ENCODE measurements at regions of chr6 and their contacts with region 1.

Region 1: DNA sequence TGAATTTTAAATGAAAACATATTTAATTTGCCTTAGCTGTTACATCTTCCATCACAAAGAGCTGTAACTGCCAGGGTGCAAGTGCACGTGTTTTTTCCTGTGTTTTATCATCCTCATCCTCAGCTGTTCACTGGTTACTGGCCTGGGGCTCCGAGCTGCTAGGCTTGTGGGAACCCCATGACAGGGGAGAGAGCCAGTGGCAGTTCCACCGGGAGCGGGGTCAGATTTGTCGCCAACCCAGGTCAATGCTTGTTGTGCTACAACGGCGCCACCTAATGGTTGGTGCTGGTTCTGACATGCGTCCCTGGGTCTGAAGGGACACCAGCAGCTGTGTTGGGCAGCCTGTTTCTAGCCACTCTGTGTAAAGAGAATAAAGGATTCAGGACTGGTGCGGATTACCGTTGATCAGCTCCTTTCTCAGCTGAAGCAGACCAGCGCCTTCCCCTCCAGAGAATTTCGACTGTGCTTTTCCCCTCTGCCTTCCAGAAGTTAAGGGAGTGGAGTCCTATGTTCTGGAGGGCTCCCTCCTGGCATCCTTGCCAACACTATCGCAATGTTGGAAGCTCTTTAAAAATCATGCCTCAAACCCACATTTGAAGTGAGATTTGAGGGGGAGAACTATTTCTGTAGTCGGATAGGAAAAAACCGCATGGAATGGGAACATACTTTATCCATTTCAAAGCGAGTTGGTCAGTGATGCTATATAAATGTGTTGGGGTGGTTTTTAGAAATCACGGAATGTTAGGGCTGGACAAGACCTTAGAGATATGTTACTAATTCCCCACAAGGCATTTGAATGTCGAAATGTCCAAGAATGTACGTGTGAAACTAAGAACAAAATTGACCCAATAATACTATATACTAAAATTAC is 32.1 kb downstream of the SUMO4 start:
- DNase-seq: peak; percentile 95
- ATAC-seq: peak; percentile 98
- H3K4me3 Mint-ChIP-seq: peak overlapping the region; percentile 28
- H3K27ac Mint-ChIP-seq: peak overlapping the region; percentile 76
- H3K4me1 Mint-ChIP-seq: peaks cover 14% of the 10 kb centered on the region
- H3K27me3 Mint-ChIP-seq: no peaks in the 10 kb centered on the region

Region 2: GRCh38 chr6:149028767-149029405 is 403.3 kb before region 1 on chr6:
- CTCF ChIA-PET with region 1: interaction called, 172 read pairs
- DNase-seq: peak; percentile 83
- ATAC-seq: peak; percentile 10
- H3K4me3 Mint-ChIP-seq: peak overlapping the region; percentile 32
- H3K27ac Mint-ChIP-seq: peak overlapping the region; percentile 72
- H3K4me1 Mint-ChIP-seq: peaks cover 55% of the 10 kb centered on the region
- H3K27me3 Mint-ChIP-seq: no peaks in the 10 kb centered on the region

Region 3: GRCh38 chr6:149060300-149060997 is 371.7 kb before region 1 on chr6:
- CTCF ChIA-PET with region 1: interaction called, 15 read pairs
- DNase-seq: peak; percentile 83
- ATAC-seq: peak; percentile 87
- H3K4me3 Mint-ChIP-seq: peak overlapping the region; percentile 62
- H3K27ac Mint-ChIP-seq: peak overlapping the region; percentile 92
- H3K4me1 Mint-ChIP-seq: peaks cover 73% of the 10 kb centered on the region
- H3K27me3 Mint-ChIP-seq: no peaks in the 10 kb centered on the region

Region 4: DNA sequence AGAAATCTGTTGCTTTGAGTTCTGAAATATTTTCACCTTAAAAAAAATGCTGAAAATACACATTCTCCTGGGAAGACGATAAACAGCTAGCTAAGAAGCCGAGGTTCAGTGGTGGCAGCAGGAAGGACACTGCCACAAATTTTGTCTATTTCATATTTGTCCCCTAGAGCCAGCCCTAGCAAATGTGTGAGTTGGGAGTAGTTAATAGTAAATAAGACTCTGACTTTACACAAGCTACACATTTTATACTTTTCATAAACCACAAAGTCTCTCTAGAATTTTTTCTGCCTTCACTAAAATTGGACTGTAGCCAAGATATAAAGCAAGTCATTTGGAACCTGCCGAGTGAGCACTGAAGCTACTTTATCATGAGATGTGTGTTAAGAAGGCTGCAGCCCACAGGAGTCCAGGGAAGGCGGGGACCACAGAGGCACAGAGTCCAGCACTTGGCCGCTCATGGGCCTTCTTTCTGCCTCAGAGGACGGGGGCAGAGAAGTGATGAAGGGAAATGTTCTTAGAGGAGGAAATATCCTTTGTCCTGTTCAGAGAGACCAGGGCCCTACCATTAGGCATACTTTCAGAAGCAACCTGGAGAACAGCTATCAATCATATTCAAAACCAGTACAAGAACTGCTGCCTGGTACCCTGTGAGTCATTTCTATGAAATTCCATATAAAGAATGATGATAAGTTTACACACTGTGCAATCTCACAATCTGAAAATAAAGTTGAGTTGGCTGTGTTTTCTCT is 356.4 kb before region 1 on chr6:
- CTCF ChIA-PET with region 1: interaction called, 28 read pairs
- DNase-seq: no peak
- ATAC-seq: peak; percentile 57
- H3K4me3 Mint-ChIP-seq: no peak overlapping the region
- H3K27ac Mint-ChIP-seq: peak overlapping the region; percentile 66
- H3K4me1 Mint-ChIP-seq: peaks cover 43% of the 10 kb centered on the region
- H3K27me3 Mint-ChIP-seq: no peaks in the 10 kb centered on the region

Region 5: GRCh38 chr6:149153100-149153499 is 279.0 kb before region 1 on chr6:
- CTCF ChIA-PET with region 1: interaction called, 13 read pairs
- DNase-seq: no peak
- ATAC-seq: no peak
- H3K4me3 Mint-ChIP-seq: peak overlapping the region; percentile 49
- H3K27ac Mint-ChIP-seq: peak overlapping the region; percentile 94
- H3K4me1 Mint-ChIP-seq: peaks cover 76% of the 10 kb centered on the region
- H3K27me3 Mint-ChIP-seq: no peaks in the 10 kb centered on the region

Region 6: DNA sequence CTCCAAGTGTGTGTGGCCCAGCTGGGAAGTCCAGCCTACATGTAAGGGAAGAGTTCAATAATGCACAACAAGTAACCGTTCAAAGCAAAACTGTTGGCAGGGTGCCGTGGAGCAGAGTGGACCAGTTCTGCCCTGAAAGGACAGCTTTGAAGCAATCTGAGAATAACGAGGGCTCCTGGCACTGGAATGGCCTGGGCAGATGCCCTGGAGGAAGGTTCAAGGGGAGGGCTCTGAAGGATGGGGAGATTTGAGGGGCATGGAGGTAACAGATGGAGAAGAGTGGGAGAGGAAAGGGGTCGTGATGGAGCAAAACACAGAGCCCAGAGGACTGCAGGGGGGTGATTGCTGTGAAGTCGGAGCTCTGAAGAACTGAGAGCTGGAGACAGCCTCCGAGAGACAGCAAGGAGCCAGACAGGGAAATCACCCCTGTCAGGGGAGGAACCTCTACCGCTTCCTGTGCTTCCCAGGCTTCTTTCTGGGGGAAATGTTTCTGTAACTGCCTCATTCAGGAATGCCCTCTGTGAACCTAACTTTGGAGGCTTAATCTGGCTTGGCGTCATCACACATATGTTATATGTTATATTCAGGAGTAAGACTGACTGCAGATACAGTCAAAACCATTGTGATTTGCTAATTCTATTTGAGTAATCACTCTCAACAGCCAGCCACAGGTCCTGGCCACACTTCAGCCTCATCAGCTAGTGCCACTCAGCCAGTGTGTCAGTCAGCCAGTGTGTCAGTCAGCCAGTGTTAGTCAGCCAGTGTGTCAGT is 11.5 kb after region 1 on chr6:
- CTCF ChIA-PET with region 1: interaction called, 25 read pairs
- DNase-seq: no peak
- ATAC-seq: peak; percentile 37
- H3K4me3 Mint-ChIP-seq: no peak overlapping the region
- H3K27ac Mint-ChIP-seq: no peak overlapping the region
- H3K4me1 Mint-ChIP-seq: peaks cover 43% of the 10 kb centered on the region
- H3K27me3 Mint-ChIP-seq: no peaks in the 10 kb centered on the region

Measured in activated CD8-positive, alpha-beta memory T cell treated with anti-CD3 and anti-CD28 coated beads, Interleukin-2, amount 10 ng/mL, durations not matched to agents 7 days and 5 days (primary cell).